ENCODE measurements at regions of chr12 and their contacts with region 1.

Region 1: GRCh38 chr12:20369305-20370005 is 1.1 kb downstream of the PDE3A start:
- DNase-seq: peak; percentile 89
- ATAC-seq: peak; percentile 86

Region 2: DNA sequence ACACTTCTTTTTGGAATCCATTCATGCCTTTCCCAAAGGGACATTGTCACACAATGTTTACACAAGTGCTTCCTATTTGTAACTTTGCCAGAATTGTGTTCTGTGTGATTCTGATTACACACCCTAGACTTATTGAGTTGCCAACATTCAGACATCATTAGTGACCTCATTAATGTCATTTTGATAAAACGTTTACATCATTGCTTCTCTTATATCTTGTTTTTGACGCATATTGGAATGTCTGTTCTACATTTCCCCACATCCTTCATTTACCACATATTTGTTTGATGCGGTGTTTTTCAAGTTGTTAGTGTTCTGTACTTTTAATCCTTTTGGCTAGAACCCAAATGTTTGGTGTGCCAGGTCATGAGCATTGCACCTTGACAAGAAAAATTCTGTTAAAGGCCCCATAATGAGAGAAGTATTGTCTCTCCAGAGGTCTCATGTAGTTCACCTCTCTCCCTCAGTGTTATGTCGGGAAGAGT is 624.7 kb before region 1 on chr12:
- intact Hi-C with region 1: loop called (anchors 2 kb)
- DNase-seq: no peak
- ATAC-seq: peak; percentile 80

Region 3: DNA sequence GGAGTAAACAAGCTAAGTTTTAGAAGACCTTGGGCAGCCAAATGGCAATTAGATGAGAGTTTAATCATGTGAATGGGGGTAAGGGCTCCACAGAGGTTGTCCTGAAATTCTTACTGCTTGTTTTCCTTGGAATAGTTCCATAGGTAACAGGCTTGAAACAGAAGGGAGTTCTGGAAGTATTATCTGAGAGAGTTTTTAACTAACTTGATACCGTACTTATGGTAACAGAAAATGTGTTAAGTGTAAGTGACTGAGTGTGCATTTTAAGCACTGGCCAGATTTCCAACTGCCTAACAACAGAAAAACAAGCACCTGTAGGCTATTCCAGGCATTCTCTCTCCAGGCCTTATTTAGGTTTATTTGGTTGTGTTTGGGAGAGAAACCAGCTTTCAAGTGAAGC is 415.7 kb before region 1 on chr12:
- intact Hi-C with region 1: loop called (anchors 5 kb)
- DNase-seq: no peak
- ATAC-seq: peak; percentile 66

Region 4: DNA sequence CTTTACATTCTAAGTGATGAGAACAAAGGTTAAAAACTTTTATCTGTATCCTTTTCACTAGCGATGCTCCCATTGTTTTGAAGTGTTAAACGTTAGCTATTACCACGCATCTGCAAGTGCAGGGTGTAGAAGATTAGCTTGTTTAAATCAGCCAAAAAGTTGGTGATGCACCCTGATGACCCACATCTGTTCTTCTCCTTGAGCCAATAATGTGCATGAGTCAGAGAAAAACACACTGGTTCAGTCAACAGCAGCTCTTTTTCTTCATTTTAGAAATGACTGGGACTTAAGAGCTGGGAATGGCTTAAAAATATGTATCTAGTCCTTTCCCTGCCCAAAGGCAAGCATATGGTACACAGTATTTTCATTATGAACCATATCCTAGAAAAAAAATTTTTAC is 324.6 kb before region 1 on chr12:
- intact Hi-C with region 1: loop called (anchors 5 kb)
- DNase-seq: no peak
- ATAC-seq: peak; percentile 86

Region 5: GRCh38 chr12:20272801-20273200 is 96.7 kb before region 1 on chr12:
- intact Hi-C with region 1: loop called (anchors 1 kb)
- DNase-seq: no peak
- ATAC-seq: peak; percentile 74

Region 6: DNA sequence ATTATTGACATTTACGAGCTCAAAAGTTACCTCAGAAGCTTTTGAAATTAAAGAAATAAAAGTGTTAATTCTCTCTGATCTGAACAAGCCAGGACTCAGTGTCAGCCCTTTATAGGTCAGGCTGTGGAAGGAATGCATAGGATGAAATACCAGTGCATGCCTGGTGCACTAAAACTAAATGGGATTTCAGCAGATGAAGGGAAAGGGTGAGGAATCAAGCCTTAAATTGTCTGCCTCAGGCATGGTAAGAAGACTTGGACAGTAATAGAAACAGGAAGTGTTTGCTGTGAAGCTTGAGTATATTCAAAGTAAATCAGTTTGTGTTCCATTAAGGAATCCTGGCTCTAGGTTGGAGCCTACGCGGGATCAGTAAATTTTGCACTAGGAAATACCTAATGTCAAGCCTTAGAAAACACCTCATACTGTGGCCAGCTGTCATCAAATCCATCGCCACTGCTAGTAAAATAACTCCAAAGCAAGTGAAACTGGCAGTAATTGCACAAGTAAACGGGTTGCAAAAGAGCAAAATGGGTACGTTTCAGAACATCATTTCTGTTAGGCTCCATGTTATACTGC is 75.2 kb after region 1 on chr12:
- intact Hi-C with region 1: loop called (anchors 5 kb)
- DNase-seq: no peak
- ATAC-seq: no peak

Region 7: GRCh38 chr12:20704860-20705259 is 335.4 kb after region 1 on chr12:
- intact Hi-C with region 1: no loop called
- DNase-seq: no peak
- ATAC-seq: no peak

Measured in Right ventricle myocardium inferior (tissue), 1 donor.